ENCODE measurements at regions of chr15 and their contacts with region 1.

Region 1: GRCh38 chr15:85116925-85117680 is 135.4 kb downstream of the PDE8A start:
- DNase-seq: no peak
- ATAC-seq: no peak

Region 2: GRCh38 chr15:84859155-84859554 is 257.9 kb before region 1 on chr15:
- intact Hi-C with region 1: no loop called
- DNase-seq: no peak
- ATAC-seq: no peak

Region 3: DNA sequence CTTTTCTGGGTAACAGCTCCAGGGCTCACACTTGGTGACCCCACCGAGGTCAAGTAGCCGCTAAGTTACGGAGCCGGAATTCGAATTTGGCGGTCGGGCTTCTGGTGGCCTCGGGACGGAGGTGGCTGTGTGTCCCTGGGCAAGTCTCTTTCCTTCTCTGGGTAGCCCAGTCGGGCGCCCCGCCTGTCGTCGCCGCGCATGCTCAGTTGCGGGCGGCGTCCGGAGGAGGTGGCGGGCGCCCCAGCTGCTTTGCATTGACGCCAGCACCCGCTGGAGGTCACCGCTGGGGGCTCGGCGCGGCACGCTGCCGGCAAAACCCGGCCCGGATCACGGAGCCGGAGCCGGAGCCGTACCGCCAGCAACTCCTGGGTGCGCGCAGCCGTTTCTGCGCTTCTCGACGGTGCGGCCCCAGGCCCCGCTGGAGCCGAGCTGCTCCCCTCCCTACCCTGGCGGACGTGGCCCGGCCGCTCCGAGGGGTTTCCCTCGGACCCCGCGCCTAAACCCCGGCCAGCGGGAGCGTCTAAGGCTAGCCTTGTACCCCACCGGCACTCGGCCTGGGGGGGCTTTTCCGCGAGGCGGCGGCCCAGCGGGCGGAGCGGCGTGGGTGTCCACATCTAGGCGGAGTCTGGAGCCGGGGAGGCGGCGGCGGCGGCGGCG is 135.9 kb before region 1 on chr15:
- intact Hi-C with region 1: loop called in 1 of 2 experiments (anchors 10 kb)
- DNase-seq: peak; percentile 95
- ATAC-seq: peak; percentile 92 to 94